ENCODE measurements at regions of chr3 and their contacts with region 1.

Region 1: GRCh38 chr3:146218880-146219866 is 31.7 kb downstream of the PLSCR4 start:
- DNase-seq: peak; percentile 71
- H3K4me3 ChIP-seq: no peak overlapping the region
- H3K27ac ChIP-seq: peak overlapping the region; percentile 10
- H3K4me1 ChIP-seq: peaks cover 50% of the 10 kb centered on the region
- H3K27me3 ChIP-seq: no peaks in the 10 kb centered on the region
- CTCF ChIP-seq: peak; percentile 37 to 39
- POLR2A ChIP-seq: no peak

Region 2: DNA sequence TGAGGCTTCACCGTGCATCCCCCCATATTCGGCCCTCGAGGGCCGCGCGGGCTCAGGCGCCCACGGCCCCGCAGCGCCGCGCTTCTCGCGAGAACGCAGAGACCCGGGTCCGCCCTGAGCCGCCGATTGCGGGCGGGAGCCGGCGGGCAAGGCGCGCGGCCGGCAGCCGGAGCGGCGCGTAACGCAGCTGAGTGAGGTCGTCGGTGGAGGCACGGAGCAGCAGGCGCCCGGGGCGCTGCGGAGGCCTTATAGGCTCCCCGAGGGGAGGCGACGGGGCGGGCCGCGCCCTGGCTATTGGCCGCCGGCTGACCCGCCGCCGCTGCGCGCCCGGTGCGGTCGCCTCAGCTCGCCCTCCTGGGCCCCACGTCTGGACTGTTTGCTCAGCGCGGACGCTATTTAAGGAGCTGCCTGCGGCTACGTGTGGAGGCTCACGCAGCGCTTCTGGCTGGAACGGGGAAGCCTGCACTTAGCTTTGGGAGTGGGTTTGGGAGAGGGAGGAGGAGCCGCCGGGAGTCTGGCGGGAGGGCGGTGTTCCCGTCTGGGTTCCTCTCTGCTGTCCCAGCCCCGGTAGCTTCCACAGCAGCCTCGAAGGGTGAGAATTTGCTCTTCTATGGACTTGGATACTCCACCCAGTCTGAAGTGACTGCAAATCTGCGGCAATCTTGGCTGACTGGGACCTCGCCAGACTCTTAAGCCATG is 58.1 kb before region 1 on chr3 and contains the start of gene PLOD2:
- CTCF ChIA-PET with region 1: interaction called, 4 read pairs
- POLR2A ChIA-PET with region 1: no interaction called
- dilution Hi-C with region 1: no loop called
- intact Hi-C with region 1: loop called (anchors 2 kb)
- DNase-seq: peak; percentile 90
- H3K4me3 ChIP-seq: peak within 1 kb of the TSS; percentile 55 to 94 (median 80)
- H3K27ac ChIP-seq: peak within 1 kb of the TSS; percentile 90
- H3K4me1 ChIP-seq: peaks cover 72% of the 10 kb centered on the region
- H3K27me3 ChIP-seq: no peaks in the 10 kb centered on the region
- CTCF ChIP-seq: no peak
- POLR2A ChIP-seq: peak; percentile 98
- total RNA-seq, gene PLOD2: 193 and 228 TPM in 2 replicates

Region 3: DNA sequence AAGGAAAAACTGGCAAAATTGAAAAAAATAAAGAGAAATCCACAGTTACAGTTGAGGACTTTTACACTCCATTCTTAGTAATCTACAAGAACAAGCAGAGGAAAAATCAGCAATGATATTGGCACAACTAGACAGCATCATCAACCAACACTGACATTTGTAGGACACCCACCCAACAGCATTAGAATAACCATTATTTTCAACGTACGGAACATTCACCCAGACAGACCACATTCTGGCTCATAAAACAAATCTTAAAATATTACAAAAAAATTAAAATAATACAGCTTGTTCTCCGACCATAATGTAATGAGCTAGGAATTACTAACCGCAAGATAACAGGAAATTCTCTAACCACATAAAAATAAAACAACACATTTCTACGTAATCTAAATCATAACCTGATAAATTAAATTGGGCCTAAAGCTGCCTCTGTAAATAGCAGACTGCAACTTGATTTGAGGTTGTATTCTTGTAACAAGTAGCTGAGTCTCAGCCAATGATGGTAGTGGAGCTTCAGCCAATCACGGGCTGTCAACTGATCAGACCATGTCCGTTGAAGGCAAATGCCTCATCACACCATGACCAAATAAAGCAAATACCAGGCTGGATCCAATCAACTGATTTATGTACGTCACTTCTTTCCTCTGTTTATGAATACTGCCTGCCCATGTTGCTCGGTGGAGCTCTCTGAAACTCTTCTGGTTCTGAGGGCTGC is 22.5 kb after region 1 on chr3:
- CTCF ChIA-PET with region 1: interaction called, 8 read pairs
- POLR2A ChIA-PET with region 1: no interaction called
- dilution Hi-C with region 1: no loop called
- intact Hi-C with region 1: loop called (anchors 1 kb)
- DNase-seq: peak; percentile 59
- H3K4me3 ChIP-seq: no peak overlapping the region
- H3K27ac ChIP-seq: peak overlapping the region; percentile 71
- H3K4me1 ChIP-seq: peaks cover 13% of the 10 kb centered on the region
- H3K27me3 ChIP-seq: no peaks in the 10 kb centered on the region
- CTCF ChIP-seq: no peak
- POLR2A ChIP-seq: peak; percentile 29

Region 4: DNA sequence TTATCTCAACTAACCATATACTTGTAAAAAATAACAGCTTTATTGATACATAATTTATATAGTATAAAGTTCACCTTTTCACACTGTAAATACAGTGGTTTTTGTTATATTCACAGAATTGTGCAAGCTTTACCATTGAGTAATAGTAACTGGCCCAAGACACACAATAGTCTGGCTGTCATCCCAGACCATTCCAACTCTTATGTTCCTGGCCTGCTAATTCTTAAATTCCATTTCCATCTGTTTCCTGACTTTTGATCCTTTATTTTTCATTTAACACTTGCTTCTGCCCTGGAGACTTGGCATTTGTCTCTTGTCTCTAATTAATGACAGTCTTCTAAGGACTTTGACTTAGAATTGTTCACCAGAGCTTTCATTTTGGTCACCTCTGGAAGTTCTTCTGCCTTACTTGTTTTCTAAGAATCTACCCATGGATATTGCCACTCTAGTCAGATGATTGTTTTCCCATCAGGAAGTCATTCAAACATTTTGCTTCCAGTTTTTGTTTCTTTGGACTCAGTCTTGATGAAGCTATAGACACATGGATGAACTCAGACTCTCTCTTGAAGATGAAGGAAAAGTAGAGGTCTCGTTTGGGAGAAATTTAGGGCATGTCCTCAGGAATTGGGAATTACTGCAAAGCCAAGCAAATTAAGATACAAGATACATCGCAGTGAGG is 58.9 kb after region 1 on chr3:
- CTCF ChIA-PET with region 1: interaction called, 12 read pairs
- POLR2A ChIA-PET with region 1: no interaction called
- dilution Hi-C with region 1: no loop called
- intact Hi-C with region 1: loop called (anchors 1 kb)
- DNase-seq: peak; percentile 97
- H3K4me3 ChIP-seq: no peak overlapping the region
- H3K27ac ChIP-seq: peak overlapping the region; percentile 89
- H3K4me1 ChIP-seq: peaks cover 57% of the 10 kb centered on the region
- H3K27me3 ChIP-seq: no peaks in the 10 kb centered on the region
- CTCF ChIP-seq: no peak
- POLR2A ChIP-seq: peak; percentile 66

Region 5: DNA sequence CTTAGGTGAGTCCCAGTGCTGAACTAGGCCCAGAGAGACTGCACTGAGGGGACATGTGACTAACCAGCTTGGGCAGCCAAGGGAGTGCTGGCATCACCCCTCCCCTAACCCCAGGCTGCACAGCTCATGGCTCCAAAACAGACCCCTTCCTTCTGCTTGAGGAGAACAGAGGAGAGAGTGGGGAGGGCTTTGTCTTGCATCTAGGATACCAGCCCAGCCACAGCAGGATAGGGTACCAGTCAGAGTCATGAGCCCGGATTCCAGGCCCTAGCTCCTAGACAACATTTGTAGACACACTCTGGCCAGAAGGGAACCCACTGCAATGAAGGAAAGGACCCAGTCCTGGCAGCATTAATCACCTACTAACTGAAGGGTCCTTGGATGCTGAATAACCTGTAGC is 81.6 kb after region 1 on chr3:
- CTCF ChIA-PET with region 1: no interaction called
- POLR2A ChIA-PET with region 1: no interaction called
- dilution Hi-C with region 1: no loop called
- intact Hi-C with region 1: no loop called
- DNase-seq: no peak
- H3K4me3 ChIP-seq: no peak overlapping the region
- H3K27ac ChIP-seq: no peak overlapping the region
- H3K4me1 ChIP-seq: no peaks in the 10 kb centered on the region
- H3K27me3 ChIP-seq: no peaks in the 10 kb centered on the region
- CTCF ChIP-seq: no peak
- POLR2A ChIP-seq: no peak

Region 6: GRCh38 chr3:146454796-146455195 is 235.6 kb after region 1 on chr3:
- CTCF ChIA-PET with region 1: no interaction called
- POLR2A ChIA-PET with region 1: no interaction called
- dilution Hi-C with region 1: no loop called
- intact Hi-C with region 1: no loop called
- DNase-seq: no peak
- H3K4me3 ChIP-seq: no peak overlapping the region
- H3K27ac ChIP-seq: no peak overlapping the region
- H3K4me1 ChIP-seq: no peaks in the 10 kb centered on the region
- H3K27me3 ChIP-seq: no peaks in the 10 kb centered on the region
- CTCF ChIP-seq: no peak
- POLR2A ChIP-seq: no peak

Region 7: DNA sequence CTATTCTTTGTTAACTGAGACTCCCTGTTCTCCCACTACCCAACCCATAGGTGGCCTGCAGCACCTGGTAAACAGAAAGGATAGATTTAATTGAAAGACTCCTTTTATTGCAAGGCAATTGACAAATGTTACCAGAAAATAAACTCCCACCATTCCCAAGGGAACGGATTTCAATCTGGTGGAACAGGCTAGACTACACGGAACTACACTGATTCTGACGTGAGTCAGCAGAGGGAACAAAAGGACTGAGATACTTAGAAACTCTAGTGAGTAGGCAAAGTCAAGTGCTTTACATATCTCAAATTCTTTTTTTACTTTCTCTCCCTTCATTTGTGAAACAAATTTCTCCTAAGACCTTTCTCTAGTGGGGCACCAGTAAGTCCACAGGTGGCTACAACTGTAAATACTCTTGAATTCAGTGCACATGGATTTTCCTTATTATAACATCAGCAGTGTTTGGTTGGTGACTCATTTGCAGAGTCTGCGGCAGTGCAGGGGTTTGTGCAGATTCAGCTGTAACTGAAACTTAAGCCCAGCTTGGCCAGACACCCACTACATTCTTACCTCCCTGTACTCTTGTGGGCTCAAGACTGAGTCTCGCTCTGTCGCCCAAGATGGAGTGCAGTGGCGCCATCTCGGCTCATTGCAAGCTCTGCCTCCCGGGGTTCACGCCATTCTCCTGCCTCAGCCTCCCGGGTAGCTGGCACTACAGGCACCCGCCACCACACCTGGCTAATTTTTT is 284.5 kb after region 1 on chr3:
- CTCF ChIA-PET with region 1: no interaction called
- POLR2A ChIA-PET with region 1: no interaction called
- dilution Hi-C with region 1: no loop called
- intact Hi-C with region 1: loop called (anchors 1 kb)
- DNase-seq: peak; percentile 45
- H3K4me3 ChIP-seq: no peak overlapping the region
- H3K27ac ChIP-seq: no peak overlapping the region
- H3K4me1 ChIP-seq: peaks cover 35% of the 10 kb centered on the region
- H3K27me3 ChIP-seq: no peaks in the 10 kb centered on the region
- CTCF ChIP-seq: no peak
- POLR2A ChIP-seq: no peak